Ovary (tissue), 10 donors: ENCODE measurements at regions of chr5 and their contacts with region 1.

Region 1: GRCh38 chr5:141524604-141525597 is 36.0 kb downstream of the PCDHGC5 start:
- DNase-seq: peak; percentile 87 to 92 (median 92)
- H3K4me3 ChIP-seq: no peak overlapping the region
- H3K27ac ChIP-seq: peak overlapping the region in 1 of 2 donors; percentile 61
- H3K4me1 ChIP-seq: peaks cover 2% of the 10 kb centered on the region
- H3K27me3 ChIP-seq: no peaks in the 10 kb centered on the region
- CTCF ChIP-seq: peak; percentile 99 to 100 (median 100)
- EP300 ChIP-seq: no peak
- POLR2A ChIP-seq: no peak

Region 2: GRCh38 chr5:139765409-139766217 is 1759.3 kb before region 1 on chr5:
- intact Hi-C with region 1: no loop called
- DNase-seq: peak; percentile 75 to 88 (median 83)
- H3K4me3 ChIP-seq: peak overlapping the region; percentile 61
- H3K27ac ChIP-seq: no peak overlapping the region
- H3K4me1 ChIP-seq: no peaks in the 10 kb centered on the region
- H3K27me3 ChIP-seq: no peaks in the 10 kb centered on the region
- CTCF ChIP-seq: peak in 2 of 3 donors; percentile 100
- EP300 ChIP-seq: no peak
- POLR2A ChIP-seq: no peak

Region 3: GRCh38 chr5:141412854-141413539 is 111.9 kb before region 1 on chr5 and contains the start of gene PCDHGA10:
- intact Hi-C with region 1: loop called in 1 of 4 experiments (anchors 10 kb)
- DNase-seq: peak in 1 of 5 donors; percentile 14
- H3K4me3 ChIP-seq: peak within 1 kb of the TSS; percentile 16
- H3K27ac ChIP-seq: no peak within 1 kb of the TSS
- H3K4me1 ChIP-seq: peaks cover 2% of the 10 kb centered on the region
- H3K27me3 ChIP-seq: no peaks in the 10 kb centered on the region
- CTCF ChIP-seq: no peak
- EP300 ChIP-seq: no peak
- POLR2A ChIP-seq: no peak
- total RNA-seq, gene PCDHGA10: 5.0 to 9.7 (median 8.1) TPM

Region 4: GRCh38 chr5:141475625-141476131 is 49.2 kb before region 1 on chr5 and contains the start of gene PCDHGC3:
- intact Hi-C with region 1: loop called in 1 of 4 experiments (anchors 5 kb)
- DNase-seq: peak; percentile 91 to 94 (median 93)
- H3K4me3 ChIP-seq: peak within 1 kb of the TSS; percentile 59
- H3K27ac ChIP-seq: peak within 1 kb of the TSS; percentile 26 to 75
- H3K4me1 ChIP-seq: peaks cover 17% of the 10 kb centered on the region
- H3K27me3 ChIP-seq: no peaks in the 10 kb centered on the region
- CTCF ChIP-seq: peak in 2 of 3 donors; percentile 50 to 73
- EP300 ChIP-seq: no peak
- POLR2A ChIP-seq: peak; percentile 77
- total RNA-seq, gene PCDHGC3: 19.6 to 85.3 (median 67.7) TPM